GM12878 (cell line): ENCODE measurements at regions of chr11 and their contacts with region 1.

Region 1: GRCh38 chr11:6619004-6619745 is at the start of gene TPP1:
- DNase-seq: peak; percentile 93
- ATAC-seq: peak; percentile 98
- H3K4me3 ChIP-seq: peak within 1 kb of the TSS; percentile 95
- H3K27ac ChIP-seq: peak within 1 kb of the TSS; percentile 90
- H3K4me1 ChIP-seq: peaks cover 5% of the 10 kb centered on the region
- H3K27me3 ChIP-seq: no peaks in the 10 kb centered on the region
- CTCF ChIP-seq: no peak
- EP300 ChIP-seq: peak; percentile 12 to 43; a peak in 2 of 4 replicates
- POLR2A ChIP-seq: peak; percentile 76
- RAD21 ChIP-seq: no peak
- polyA plus RNA-seq, gene TPP1: 7.5 to 14.4 TPM

Region 2: DNA sequence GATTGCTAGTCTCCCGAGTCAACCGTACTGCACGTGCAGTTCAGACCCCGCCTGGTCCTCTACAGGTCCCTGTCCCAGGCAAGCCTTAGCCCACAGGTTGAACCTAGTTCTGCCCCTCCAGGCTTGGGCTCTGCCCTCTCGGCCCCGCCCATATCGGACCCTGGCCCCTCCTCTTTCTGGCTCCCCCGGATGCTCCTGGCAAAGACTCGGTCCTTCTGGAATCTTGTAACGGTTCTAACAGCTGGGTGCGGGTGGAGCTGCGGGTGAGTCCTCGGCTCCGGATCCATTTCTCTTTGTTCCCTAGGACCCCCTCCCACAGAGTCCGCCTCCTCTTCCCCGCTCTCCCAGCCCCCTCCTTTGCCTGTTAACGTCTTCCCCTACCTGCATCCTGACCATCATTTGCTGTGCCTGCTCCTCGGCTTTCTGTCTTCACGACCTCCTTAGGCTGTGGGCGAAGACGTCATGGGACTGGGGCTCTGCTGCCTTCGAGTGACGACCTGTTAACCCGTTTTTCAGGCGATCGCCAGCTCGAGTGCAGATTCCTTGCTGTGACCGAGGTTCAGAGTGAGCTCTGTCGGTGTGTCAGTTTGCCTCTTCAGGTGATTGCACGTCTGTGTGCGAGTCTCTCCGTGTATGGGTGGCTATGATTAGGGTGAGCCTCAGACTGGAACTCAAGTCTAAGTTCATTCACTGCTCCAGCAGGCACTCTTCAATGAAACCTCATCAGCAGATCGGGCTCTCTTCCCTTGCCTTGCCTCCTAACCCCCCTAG is 121.9 kb before region 1 on chr11 and contains the start of gene DNHD1:
- CTCF ChIA-PET with region 1: no interaction called
- POLR2A ChIA-PET with region 1: no interaction called
- RAD21 ChIA-PET with region 1: no interaction called
- SMC1A ChIA-PET with region 1: no interaction called
- in situ Hi-C with region 1: no loop called
- intact Hi-C with region 1: no loop called
- DNase-seq: no peak
- ATAC-seq: no peak
- H3K4me3 ChIP-seq: no peak within 1 kb of the TSS
- H3K27ac ChIP-seq: no peak within 1 kb of the TSS
- H3K4me1 ChIP-seq: no peaks in the 10 kb centered on the region
- H3K27me3 ChIP-seq: no peaks in the 10 kb centered on the region
- CTCF ChIP-seq: no peak
- EP300 ChIP-seq: no peak
- POLR2A ChIP-seq: no peak
- RAD21 ChIP-seq: no peak
- polyA plus RNA-seq, gene DNHD1: 0.99 to 1.1 TPM

Region 3: DNA sequence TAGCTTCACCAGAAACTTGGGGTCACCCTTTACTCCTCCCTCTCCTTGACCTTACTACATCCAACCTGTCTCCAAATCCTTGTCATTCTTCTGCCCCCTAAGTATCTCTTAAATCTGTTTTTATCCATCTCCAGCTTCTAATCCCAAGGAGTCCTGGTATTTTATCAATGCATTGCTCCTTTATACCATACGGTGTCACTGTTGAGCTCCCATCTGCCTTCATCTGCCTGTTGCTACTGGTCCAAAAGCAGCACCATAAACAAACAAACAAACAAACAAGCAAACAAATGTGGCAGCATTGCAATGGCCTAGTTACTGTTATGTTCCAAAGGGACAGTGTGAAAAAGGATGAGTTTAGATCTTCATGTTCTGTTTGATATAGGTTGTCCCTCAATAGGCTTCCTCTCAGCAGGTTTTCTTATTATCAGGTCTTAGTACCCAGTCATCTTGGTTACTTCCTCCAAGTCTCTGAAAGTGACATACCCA is 87.9 kb before region 1 on chr11:
- CTCF ChIA-PET with region 1: interaction called, 14 read pairs
- POLR2A ChIA-PET with region 1: no interaction called
- RAD21 ChIA-PET with region 1: interaction called, 8 read pairs
- SMC1A ChIA-PET with region 1: interaction called, 4 read pairs
- in situ Hi-C with region 1: no loop called
- intact Hi-C with region 1: no loop called
- DNase-seq: peak; percentile 27
- ATAC-seq: peak; percentile 80
- H3K4me3 ChIP-seq: no peak overlapping the region
- H3K27ac ChIP-seq: no peak overlapping the region
- H3K4me1 ChIP-seq: peaks cover 8% of the 10 kb centered on the region; the same call in 1 of the 2 replicates
- H3K27me3 ChIP-seq: no peaks in the 10 kb centered on the region
- CTCF ChIP-seq: peak; percentile 66 to 73 (median 70)
- EP300 ChIP-seq: no peak
- POLR2A ChIP-seq: no peak
- RAD21 ChIP-seq: peak; percentile 89

Region 4: DNA sequence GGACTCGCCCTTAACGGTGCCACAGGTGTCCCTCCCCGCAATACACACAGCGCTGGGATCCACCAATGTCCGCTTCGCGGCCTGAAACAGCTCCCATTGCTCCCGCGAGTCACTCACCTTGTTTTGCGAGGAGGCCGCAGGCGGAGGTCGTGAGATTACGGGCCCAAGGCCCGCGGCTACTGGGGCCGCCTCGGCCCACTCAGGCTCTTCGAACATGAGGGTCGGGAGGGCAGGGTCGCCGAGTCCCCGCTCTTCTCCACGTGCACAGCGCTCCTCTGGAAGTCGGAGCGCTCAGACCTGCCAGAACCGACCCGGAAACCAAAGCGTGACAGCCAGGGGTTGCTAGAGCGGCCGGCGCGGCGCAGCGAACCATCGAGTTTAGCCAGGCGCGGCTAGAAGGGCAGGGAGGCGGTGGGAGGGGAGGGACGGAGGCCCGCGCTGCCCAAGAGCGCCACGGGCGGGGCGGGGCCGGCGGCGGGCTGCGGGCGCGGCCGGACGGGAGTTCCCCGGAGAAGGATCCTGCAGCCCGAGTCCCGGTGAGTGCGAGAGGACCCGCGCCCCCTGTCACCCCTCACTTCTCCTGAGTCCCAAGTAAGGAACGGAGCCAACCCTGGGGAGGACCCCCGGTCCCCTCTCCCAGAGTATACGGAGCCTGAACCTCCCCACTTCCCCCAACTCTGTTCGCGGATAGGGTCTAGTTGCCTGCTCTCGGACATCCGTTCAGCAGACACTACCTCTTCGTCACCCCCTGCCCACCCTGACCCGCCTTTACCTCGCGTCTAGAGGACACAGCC is 15.7 kb before region 1 on chr11 and contains the starts of genes ILK and RRP8:
- CTCF ChIA-PET with region 1: interaction called, 27 read pairs
- POLR2A ChIA-PET with region 1: interaction called, 85 read pairs
- RAD21 ChIA-PET with region 1: interaction called, 55 read pairs
- SMC1A ChIA-PET with region 1: interaction called, 21 read pairs
- in situ Hi-C with region 1: no loop called
- intact Hi-C with region 1: no loop called
- DNase-seq: peak; percentile 59
- ATAC-seq: peak; percentile 83
- H3K4me3 ChIP-seq: peak within 1 kb of the TSS; percentile 96
- H3K27ac ChIP-seq: peak within 1 kb of the TSS; percentile 85
- H3K4me1 ChIP-seq: peaks cover 25% of the 10 kb centered on the region
- H3K27me3 ChIP-seq: no peaks in the 10 kb centered on the region
- CTCF ChIP-seq: peak in 1 of 3 experiments; percentile 1; a peak in 1 of 6 replicates
- EP300 ChIP-seq: peak in 1 of 2 experiments; percentile 48; a peak in 1 of 4 replicates
- POLR2A ChIP-seq: peak; percentile 94
- RAD21 ChIP-seq: 0 out of 2 replicates have a peak, but pooled peaks have one; percentile 21
- polyA plus RNA-seq, gene ILK: 51.8 to 77.8 TPM
- polyA plus RNA-seq, gene RRP8: 4.7 to 15.8 TPM

Region 5: DNA sequence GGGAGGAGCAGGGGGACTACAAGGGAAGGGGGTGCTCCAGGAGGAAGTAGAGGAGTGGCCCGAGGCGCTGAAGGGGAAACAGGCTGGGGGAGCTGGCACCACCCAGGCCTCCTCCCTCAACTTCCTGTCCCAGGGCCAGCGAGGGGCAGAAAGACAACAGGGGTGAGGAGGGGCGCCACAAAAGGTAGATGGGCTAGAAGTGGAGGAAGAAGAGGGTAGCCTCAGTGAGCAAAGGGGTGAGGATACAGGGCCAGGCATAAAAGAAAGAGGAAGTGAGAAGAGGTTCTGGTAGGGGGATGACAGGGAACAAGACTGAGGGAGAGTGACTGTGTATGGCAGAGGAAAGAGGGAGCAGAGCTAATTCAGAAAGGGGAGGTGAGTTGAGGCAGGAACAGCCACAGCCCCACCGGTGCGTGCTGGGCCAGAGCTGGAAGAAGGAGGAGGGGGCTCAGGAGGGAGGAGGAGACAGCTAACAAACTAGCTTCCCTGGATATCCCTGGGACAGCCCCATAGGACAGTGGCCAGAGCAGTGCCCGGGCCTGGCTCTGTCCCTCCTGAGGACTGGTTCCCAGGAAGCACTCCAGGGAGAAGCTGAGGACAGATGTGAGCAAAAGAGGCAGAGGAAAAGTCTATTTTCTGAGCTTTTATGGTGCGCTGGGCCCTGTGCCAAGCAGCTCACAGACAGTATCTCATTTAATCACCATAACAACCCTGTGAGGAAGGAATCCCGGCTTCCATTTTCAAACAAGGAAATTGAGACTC is 27.9 kb after region 1 on chr11:
- CTCF ChIA-PET with region 1: interaction called, 4 read pairs
- POLR2A ChIA-PET with region 1: interaction called, 6 read pairs
- RAD21 ChIA-PET with region 1: interaction called, 3 read pairs
- SMC1A ChIA-PET with region 1: interaction called, 14 read pairs
- in situ Hi-C with region 1: no loop called
- intact Hi-C with region 1: no loop called
- DNase-seq: peak; percentile 61
- ATAC-seq: peak; percentile 97
- H3K4me3 ChIP-seq: no peak overlapping the region
- H3K27ac ChIP-seq: peak overlapping the region; percentile 68
- H3K4me1 ChIP-seq: peaks cover 21% of the 10 kb centered on the region
- H3K27me3 ChIP-seq: no peaks in the 10 kb centered on the region
- CTCF ChIP-seq: no peak
- EP300 ChIP-seq: peak in 1 of 2 experiments; percentile 63; a peak in 1 of 4 replicates
- POLR2A ChIP-seq: peak; percentile 37; the same call in 1 of the 2 replicates
- RAD21 ChIP-seq: no peak

Region 6: DNA sequence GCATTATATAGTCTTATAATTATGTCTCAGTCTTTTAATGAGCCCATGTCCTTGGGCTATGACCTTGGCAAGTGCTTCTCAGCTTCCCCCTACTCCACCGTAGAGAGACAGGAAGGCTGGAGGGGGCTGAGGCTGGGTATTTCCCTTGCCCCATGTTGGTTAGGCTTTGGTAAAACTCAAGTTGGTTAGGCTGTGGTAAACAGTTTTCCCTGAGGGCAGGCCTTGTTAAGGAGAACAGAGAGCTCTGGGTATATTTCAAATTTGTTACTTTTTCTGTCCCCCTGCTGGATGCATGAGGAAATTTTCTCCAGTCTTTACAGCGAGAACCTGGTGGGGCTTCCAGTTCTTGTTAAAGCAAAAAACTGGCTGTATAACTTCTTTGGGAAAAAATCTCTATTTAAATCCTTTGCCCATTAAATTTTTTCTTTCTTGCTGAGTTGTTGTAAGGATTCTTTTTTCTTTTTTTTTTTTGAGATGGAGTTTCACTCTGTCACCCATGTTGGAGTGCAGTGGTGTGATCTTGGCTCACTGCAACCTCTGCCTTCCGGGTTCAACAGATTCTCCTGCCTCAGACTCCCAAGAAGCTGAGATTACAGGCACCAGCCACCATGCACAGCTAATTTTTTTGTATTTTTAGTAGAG is 48.7 kb after region 1 on chr11:
- CTCF ChIA-PET with region 1: interaction called, 17 read pairs
- POLR2A ChIA-PET with region 1: interaction called, 9 read pairs
- RAD21 ChIA-PET with region 1: interaction called, 10 read pairs
- SMC1A ChIA-PET with region 1: interaction called, 3 read pairs
- in situ Hi-C with region 1: no loop called
- intact Hi-C with region 1: loop called (anchors 2 kb)
- DNase-seq: peak; percentile 48
- ATAC-seq: peak; percentile 93
- H3K4me3 ChIP-seq: no peak overlapping the region
- H3K27ac ChIP-seq: no peak overlapping the region
- H3K4me1 ChIP-seq: no peaks in the 10 kb centered on the region
- H3K27me3 ChIP-seq: no peaks in the 10 kb centered on the region
- CTCF ChIP-seq: peak; percentile 40 to 54 (median 52); a peak in 5 of 6 replicates
- EP300 ChIP-seq: no peak
- POLR2A ChIP-seq: no peak
- RAD21 ChIP-seq: peak; percentile 41

Region 7: GRCh38 chr11:6746086-6746618 is 127.0 kb after region 1 on chr11:
- CTCF ChIA-PET with region 1: interaction called, 3 read pairs
- POLR2A ChIA-PET with region 1: interaction called, 10 read pairs
- RAD21 ChIA-PET with region 1: interaction called, 4 read pairs
- SMC1A ChIA-PET with region 1: interaction called, 3 read pairs
- in situ Hi-C with region 1: no loop called
- intact Hi-C with region 1: loop called (anchors 5 kb)
- DNase-seq: peak; percentile 68
- ATAC-seq: peak; percentile 83
- H3K4me3 ChIP-seq: peak overlapping the region; percentile 71
- H3K27ac ChIP-seq: peak overlapping the region; percentile 99
- H3K4me1 ChIP-seq: peaks cover 22% of the 10 kb centered on the region; the same call in 1 of the 2 replicates
- H3K27me3 ChIP-seq: no peaks in the 10 kb centered on the region
- CTCF ChIP-seq: no peak
- EP300 ChIP-seq: no peak
- POLR2A ChIP-seq: peak; percentile 83
- RAD21 ChIP-seq: no peak

Region 8: GRCh38 chr11:6855971-6856541 is 236.9 kb after region 1 on chr11:
- CTCF ChIA-PET with region 1: no interaction called
- POLR2A ChIA-PET with region 1: no interaction called
- RAD21 ChIA-PET with region 1: no interaction called
- SMC1A ChIA-PET with region 1: no interaction called
- in situ Hi-C with region 1: no loop called
- intact Hi-C with region 1: no loop called
- DNase-seq: no peak
- ATAC-seq: peak; percentile 61
- H3K4me3 ChIP-seq: no peak overlapping the region
- H3K27ac ChIP-seq: no peak overlapping the region
- H3K4me1 ChIP-seq: no peaks in the 10 kb centered on the region
- H3K27me3 ChIP-seq: no peaks in the 10 kb centered on the region
- CTCF ChIP-seq: no peak
- EP300 ChIP-seq: no peak
- POLR2A ChIP-seq: no peak
- RAD21 ChIP-seq: no peak